A549 (cell line): ENCODE measurements at regions of chr14 and their contacts with region 1.

Region 1: GRCh38 chr14:76876076-76876475 is 49.9 kb downstream of the LRRC74A start:
- DNase-seq: peak; percentile 80 to 86
- ATAC-seq: peak; percentile 91 to 94
- H3K4me3 ChIP-seq: no peak overlapping the region
- H3K27ac ChIP-seq: peak overlapping the region; percentile 57 to 69
- H3K4me1 ChIP-seq: peaks cover 4% of the 10 kb centered on the region; the same call in 1 of the 3 replicates
- CTCF ChIP-seq: peak; percentile 96
- EP300 ChIP-seq: no peak
- POLR2A ChIP-seq: no peak
- RAD21 ChIP-seq: peak; percentile 99 to 100

Region 2: DNA sequence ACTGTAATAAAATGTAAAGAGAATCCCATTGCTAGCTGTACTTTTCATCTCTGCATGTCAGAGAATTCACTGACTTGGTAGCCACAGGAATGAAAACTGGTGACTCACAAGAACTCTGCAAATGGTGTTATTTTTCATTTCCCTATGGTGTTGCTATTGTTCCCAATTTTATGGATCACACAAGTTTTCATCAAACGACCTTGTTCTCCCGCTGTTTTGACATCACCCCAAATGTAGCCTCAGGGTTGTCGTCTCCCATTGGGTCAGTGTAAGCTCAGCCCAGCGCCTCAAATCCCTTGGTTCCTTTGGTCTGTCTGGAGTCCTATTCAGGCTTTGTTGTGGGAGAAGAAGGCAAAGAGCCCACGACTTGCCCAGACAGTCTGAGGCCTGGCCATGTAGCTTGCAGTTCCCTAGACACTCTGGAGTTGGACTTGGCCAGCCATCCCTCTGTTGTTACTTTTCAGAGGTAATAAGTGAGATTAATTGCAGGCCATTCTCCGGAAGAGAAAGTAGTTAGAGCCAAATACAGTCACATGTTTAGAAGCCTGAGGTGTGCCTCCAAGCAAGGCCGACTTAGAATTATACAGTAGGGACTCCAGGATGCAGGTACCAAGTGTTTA is 1053.4 kb before region 1 on chr14:
- CTCF ChIA-PET with region 1: no interaction called
- POLR2A ChIA-PET with region 1: no interaction called
- DNase-seq: no peak
- ATAC-seq: no peak
- H3K4me3 ChIP-seq: no peak overlapping the region
- H3K27ac ChIP-seq: no peak overlapping the region
- H3K4me1 ChIP-seq: no peaks in the 10 kb centered on the region
- CTCF ChIP-seq: no peak
- EP300 ChIP-seq: no peak
- POLR2A ChIP-seq: no peak
- RAD21 ChIP-seq: no peak

Region 3: DNA sequence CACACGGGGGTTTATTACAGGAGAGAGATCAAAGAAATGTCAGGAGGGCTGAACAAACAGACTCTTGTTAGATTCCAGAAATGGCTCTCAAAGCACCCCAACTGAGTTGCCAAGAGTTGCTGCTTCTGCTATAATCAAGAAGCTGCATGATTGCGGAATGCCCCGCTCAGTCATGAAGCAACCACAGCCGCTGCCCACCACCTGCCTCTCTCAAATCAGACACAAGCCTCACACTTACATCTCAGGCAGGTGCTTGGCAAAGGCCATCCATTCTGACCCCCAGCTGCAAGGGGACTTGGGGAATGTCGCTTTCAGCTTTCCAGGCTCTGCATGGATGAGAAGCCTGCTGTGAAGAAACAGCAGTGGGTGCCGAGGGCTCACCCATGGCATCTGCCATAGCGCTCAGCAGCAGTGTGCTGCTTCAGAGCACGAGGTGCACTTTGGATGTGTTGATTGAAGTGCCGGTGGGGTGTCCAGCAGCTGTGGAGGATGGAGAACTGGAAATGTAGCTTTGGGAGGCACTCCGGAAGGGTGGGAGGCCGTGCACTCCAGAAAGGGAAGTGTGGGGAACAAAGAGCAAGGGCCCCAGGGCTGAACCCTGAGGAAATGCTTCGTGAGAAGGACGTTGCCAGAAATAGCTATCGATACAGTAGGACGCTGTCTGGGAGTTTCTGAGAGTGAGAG is 12.2 kb before region 1 on chr14:
- CTCF ChIA-PET with region 1: interaction called, 87 read pairs
- POLR2A ChIA-PET with region 1: no interaction called
- DNase-seq: no peak
- ATAC-seq: no peak
- H3K4me3 ChIP-seq: no peak overlapping the region
- H3K27ac ChIP-seq: no peak overlapping the region
- H3K4me1 ChIP-seq: no peaks in the 10 kb centered on the region
- CTCF ChIP-seq: no peak
- EP300 ChIP-seq: no peak
- POLR2A ChIP-seq: no peak
- RAD21 ChIP-seq: no peak

Region 4: DNA sequence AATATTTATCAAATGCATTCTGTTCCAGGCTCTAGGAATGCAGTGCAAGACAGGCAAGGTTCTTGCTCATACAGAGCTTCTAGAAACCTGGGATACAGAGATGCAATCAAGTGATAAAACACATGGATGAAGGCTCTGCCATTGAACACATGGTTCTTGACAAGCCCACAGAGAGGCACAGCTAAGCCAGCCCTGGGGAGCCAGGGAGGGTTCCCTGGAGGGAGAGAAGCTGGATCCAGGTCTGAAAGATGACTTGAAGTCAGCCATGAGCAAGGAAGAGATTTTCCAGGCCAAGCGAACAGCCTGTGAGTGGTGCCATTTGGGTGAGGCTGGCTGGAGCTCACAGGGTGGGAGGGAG is 86.2 kb after region 1 on chr14:
- CTCF ChIA-PET with region 1: interaction called, 15 read pairs
- POLR2A ChIA-PET with region 1: no interaction called
- DNase-seq: no peak
- ATAC-seq: peak; percentile 21 to 25; a peak in 5 of 6 replicates
- H3K4me3 ChIP-seq: peak overlapping the region; percentile 30
- H3K27ac ChIP-seq: peak overlapping the region; percentile 96 to 100
- H3K4me1 ChIP-seq: peaks cover 52% of the 10 kb centered on the region
- CTCF ChIP-seq: no peak
- EP300 ChIP-seq: no peak
- POLR2A ChIP-seq: no peak
- RAD21 ChIP-seq: no peak

Region 5: GRCh38 chr14:77023001-77023996 is 147.2 kb after region 1 on chr14:
- CTCF ChIA-PET with region 1: interaction called, 67 read pairs
- POLR2A ChIA-PET with region 1: interaction called, 4 read pairs
- DNase-seq: peak in 1 of 2 experiments; percentile 75
- ATAC-seq: peak in 1 of 2 experiments; percentile 50; a peak in 3 of 6 replicates
- H3K4me3 ChIP-seq: peak overlapping the region; percentile 78; the same call in 2 of the 3 replicates
- H3K27ac ChIP-seq: peak overlapping the region; percentile 95 to 99
- H3K4me1 ChIP-seq: peaks cover 31% of the 10 kb centered on the region
- CTCF ChIP-seq: no peak
- EP300 ChIP-seq: no peak; a peak in 1 of 5 replicates
- POLR2A ChIP-seq: no peak
- RAD21 ChIP-seq: peak; percentile 28 to 31; a peak in 2 of 5 replicates

Region 6: GRCh38 chr14:77053046-77053841 is 177.2 kb after region 1 on chr14:
- CTCF ChIA-PET with region 1: interaction called, 116 read pairs
- POLR2A ChIA-PET with region 1: no interaction called
- DNase-seq: peak in 1 of 2 experiments; percentile 65
- ATAC-seq: peak; percentile 28 to 88; a peak in 3 of 6 replicates
- H3K4me3 ChIP-seq: no peak overlapping the region
- H3K27ac ChIP-seq: peak overlapping the region; percentile 66 to 81
- H3K4me1 ChIP-seq: peaks cover 19% of the 10 kb centered on the region
- CTCF ChIP-seq: peak; percentile 67
- EP300 ChIP-seq: no peak
- POLR2A ChIP-seq: no peak
- RAD21 ChIP-seq: peak; percentile 83 to 86

Region 7: GRCh38 chr14:77097700-77098528 is 221.8 kb after region 1 on chr14 and contains the start of gene CIPC:
- CTCF ChIA-PET with region 1: interaction called, 1,600 read pairs
- POLR2A ChIA-PET with region 1: interaction called, 3 read pairs
- DNase-seq: peak; percentile 97 to 99
- ATAC-seq: peak; percentile 91 to 96
- H3K4me3 ChIP-seq: peak within 1 kb of the TSS; percentile 92
- H3K27ac ChIP-seq: peak within 1 kb of the TSS; percentile 94 to 96
- H3K4me1 ChIP-seq: peaks cover 19% of the 10 kb centered on the region
- CTCF ChIP-seq: no peak
- EP300 ChIP-seq: peak in 1 of 2 experiments; percentile 35; a peak in 1 of 5 replicates
- POLR2A ChIP-seq: peak; percentile 87
- RAD21 ChIP-seq: no peak
- polyA plus RNA-seq, gene CIPC: 13.9 and 15.2 TPM in 2 replicates

Region 8: DNA sequence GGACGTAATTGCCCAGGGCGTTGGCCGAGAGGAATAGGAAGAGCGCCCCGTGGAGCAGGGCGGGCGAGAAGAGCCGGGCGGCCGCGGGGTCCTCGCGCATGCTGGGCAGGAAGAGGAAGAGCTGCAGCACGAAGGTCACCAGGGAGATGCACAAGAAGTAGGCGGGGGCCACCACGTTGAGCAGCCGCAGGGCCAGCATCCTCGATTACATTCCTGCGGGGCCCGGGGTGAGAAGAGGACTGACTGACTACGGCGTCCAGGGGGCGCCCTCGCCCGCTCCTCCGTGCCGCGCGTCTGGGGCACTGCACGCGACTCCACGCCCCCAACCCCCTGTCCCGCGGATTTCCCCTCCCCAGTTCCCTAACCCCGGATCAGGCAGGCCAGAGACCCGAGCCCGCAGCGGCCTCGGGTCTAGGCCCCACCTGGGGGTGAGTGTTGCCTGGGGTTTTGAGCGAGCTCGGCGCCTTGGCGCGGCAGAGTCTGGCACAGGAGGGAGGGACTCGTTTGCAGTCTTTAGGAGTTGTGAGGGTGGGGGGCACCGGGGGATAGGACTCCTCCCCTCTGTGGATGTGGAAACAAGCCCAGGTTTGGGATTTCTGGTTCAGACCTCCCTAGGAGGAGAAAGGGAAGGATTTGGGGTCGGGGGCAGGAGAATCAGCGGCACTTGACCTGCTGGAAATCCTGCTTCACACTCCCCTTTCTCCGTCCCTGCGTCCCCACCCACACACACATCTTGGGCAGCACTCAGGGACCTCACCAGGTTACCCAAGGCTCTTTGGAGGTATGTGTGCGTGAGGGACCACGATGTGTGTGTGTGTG is 263.7 kb after region 1 on chr14:
- CTCF ChIA-PET with region 1: interaction called, 18 read pairs
- POLR2A ChIA-PET with region 1: no interaction called
- DNase-seq: peak; percentile 59 to 89
- ATAC-seq: peak; percentile 67 to 87
- H3K4me3 ChIP-seq: peak overlapping the region; percentile 58
- H3K27ac ChIP-seq: peak overlapping the region in 1 of 2 experiments; percentile 43; a peak in 1 of 6 replicates
- H3K4me1 ChIP-seq: peaks cover 9% of the 10 kb centered on the region
- CTCF ChIP-seq: peak; percentile 70
- EP300 ChIP-seq: no peak
- POLR2A ChIP-seq: no peak
- RAD21 ChIP-seq: peak; percentile 55 to 59